ENCODE measurements at regions of chr7 and their contacts with region 1.

Region 1: GRCh38 chr7:117312598-117313580 is 10.0 kb downstream of the WNT2 start:
- DNase-seq: no peak
- H3K4me3 ChIP-seq: no peak overlapping the region
- H3K27ac ChIP-seq: no peak overlapping the region
- H3K27me3 ChIP-seq: no peaks in the 10 kb centered on the region
- CTCF ChIP-seq: peak in 54 of 56 donors; percentile 12 to 73 (median 46)

Region 2: GRCh38 chr7:116984917-116985316 is 328.0 kb before region 1 on chr7:
- intact Hi-C with region 1: no loop called
- DNase-seq: no peak
- H3K4me3 ChIP-seq: no peak overlapping the region
- H3K27ac ChIP-seq: no peak overlapping the region
- H3K27me3 ChIP-seq: no peaks in the 10 kb centered on the region
- CTCF ChIP-seq: peak; percentile 58 to 89 (median 79)

Region 3: GRCh38 chr7:117251687-117252086 is 61.2 kb before region 1 on chr7:
- intact Hi-C with region 1: no loop called
- DNase-seq: no peak
- H3K4me3 ChIP-seq: no peak overlapping the region
- H3K27ac ChIP-seq: no peak overlapping the region
- H3K27me3 ChIP-seq: peaks cover 0 to 4% (median 0%) of the 10 kb centered on the region in 45 donors
- CTCF ChIP-seq: no peak

Region 4: DNA sequence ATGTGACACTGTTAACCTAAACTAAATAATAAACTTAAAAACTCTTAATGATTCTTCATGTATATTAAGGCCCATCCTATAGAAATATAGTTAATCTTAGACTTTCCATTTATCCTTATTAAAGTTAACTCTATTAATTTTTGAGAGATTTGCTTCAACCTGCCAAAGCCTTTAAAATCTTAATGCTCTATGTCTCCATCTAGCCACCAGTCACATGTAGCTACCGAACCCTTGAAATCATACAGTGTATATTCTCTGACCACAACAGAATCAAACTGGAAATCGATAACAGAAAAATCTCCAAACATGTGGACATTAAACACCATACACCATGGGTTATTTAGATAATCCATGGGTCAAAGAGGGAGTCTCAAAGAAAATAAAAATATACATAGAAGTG is 62.5 kb after region 1 on chr7:
- intact Hi-C with region 1: loop called (anchors 5 kb)
- DNase-seq: no peak
- H3K4me3 ChIP-seq: no peak overlapping the region
- H3K27ac ChIP-seq: no peak overlapping the region
- H3K27me3 ChIP-seq: no peaks in the 10 kb centered on the region
- CTCF ChIP-seq: peak in 47 of 56 donors; percentile 13 to 67 (median 36)